ENCODE measurements at regions of chr9 and their contacts with region 1.

Region 1: DNA sequence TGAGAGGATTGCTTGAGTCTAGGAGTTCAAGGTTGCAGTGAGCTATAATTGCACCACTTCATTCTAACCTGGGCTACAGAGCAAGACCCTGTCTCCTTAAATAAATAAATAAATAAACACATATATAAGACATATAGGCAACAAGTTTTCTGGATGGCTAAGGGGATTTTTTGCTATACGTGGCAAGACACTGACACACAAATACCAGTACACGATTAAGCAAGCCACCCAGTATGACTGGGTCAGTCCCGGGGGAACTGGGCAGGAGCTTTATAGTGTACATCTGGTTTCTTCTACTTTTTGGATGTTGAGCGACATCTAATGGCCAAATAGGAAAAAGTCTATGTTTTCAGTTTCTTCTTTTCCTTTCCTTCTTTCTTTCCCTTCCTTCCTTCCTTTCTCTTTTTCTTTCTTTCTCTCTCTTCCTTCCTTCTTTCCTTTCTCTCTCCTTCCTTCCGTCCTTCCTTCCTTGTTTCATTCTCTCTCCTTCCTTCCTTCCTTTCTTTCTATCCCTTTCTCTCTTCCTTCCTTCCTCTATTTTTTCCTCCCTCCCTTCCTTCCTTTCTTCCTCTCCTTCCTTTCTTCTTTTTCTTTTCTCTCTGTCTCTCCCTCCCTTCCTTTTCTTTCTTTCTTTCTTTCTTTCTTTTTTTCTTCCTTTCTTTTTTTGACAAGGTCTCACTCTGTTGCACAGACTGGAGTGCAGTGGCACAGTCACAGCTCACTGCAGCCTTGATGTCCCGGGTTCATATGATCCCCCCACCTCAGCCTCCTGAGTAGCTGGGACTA is 47.0 kb upstream of the PLIN2 start:
- DNase-seq: peak; percentile 65
- H3K4me3 ChIP-seq: no peak overlapping the region
- H3K27ac ChIP-seq: no peak overlapping the region
- H3K27me3 ChIP-seq: no peaks in the 10 kb centered on the region
- CTCF ChIP-seq: peak; percentile 68

Region 2: DNA sequence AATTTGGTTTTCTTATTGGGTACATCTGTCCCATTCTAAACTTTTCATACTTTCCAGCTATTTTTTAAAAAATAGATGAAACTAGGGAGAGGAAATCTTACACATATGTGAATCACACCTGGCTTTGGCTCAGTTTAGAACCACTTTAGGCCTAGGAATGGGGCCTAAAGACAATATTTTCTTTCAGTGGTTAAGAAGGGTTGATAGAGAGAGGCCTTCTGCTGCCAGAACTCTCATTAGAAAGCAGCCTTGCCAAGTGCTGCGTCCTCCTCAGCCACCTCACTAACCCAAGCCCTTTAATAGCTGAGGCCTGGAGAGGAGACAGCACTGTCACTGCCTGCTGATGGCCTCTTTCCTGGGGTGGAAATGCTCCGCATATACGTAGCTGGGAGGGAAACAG is 308.8 kb before region 1 on chr9:
- CTCF ChIA-PET with region 1: no interaction called
- POLR2A ChIA-PET with region 1: no interaction called
- DNase-seq: no peak
- H3K4me3 ChIP-seq: no peak overlapping the region
- H3K27ac ChIP-seq: no peak overlapping the region
- H3K27me3 ChIP-seq: no peaks in the 10 kb centered on the region
- CTCF ChIP-seq: no peak

Region 3: GRCh38 chr9:19028835-19029451 is 145.4 kb before region 1 on chr9:
- CTCF ChIA-PET with region 1: interaction called, 10 read pairs
- POLR2A ChIA-PET with region 1: no interaction called
- DNase-seq: peak; percentile 52
- H3K4me3 ChIP-seq: no peak overlapping the region
- H3K27ac ChIP-seq: no peak overlapping the region
- H3K27me3 ChIP-seq: peaks cover 2% of the 10 kb centered on the region
- CTCF ChIP-seq: peak; percentile 74

Region 4: GRCh38 chr9:19048966-19049916 is 125.1 kb before region 1 on chr9 and contains the start of gene RRAGA:
- CTCF ChIA-PET with region 1: interaction called, 53 read pairs
- POLR2A ChIA-PET with region 1: interaction called, 8 read pairs
- DNase-seq: peak; percentile 94
- H3K4me3 ChIP-seq: peak within 1 kb of the TSS; percentile 88
- H3K27ac ChIP-seq: peak within 1 kb of the TSS; percentile 94
- H3K27me3 ChIP-seq: no peaks in the 10 kb centered on the region
- CTCF ChIP-seq: peak; percentile 85
- polyA plus RNA-seq, gene RRAGA: 180 and 186 TPM in 2 replicates

Region 5: DNA sequence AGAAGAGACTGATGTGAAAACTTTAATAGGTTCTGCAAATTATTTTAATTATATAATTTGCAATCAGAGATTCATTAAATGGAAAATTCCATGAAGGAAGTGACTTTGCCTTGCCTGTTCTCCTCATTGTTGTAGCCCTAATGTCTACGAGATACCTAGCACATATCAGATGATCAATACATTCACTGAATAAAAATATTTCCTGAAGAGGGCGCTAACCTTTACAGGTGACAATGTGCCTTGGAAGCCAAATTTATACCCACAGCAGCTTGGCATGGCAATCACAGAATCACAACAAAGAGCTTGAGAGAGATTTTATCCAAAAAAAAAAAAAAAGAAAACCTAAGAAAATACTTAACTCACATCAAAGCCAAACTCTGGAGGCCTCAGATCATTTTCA is 89.0 kb before region 1 on chr9:
- CTCF ChIA-PET with region 1: interaction called, 29 read pairs
- POLR2A ChIA-PET with region 1: interaction called, 4 read pairs
- DNase-seq: no peak
- H3K4me3 ChIP-seq: no peak overlapping the region
- H3K27ac ChIP-seq: no peak overlapping the region
- H3K27me3 ChIP-seq: no peaks in the 10 kb centered on the region
- CTCF ChIP-seq: peak; percentile 37

Region 6: DNA sequence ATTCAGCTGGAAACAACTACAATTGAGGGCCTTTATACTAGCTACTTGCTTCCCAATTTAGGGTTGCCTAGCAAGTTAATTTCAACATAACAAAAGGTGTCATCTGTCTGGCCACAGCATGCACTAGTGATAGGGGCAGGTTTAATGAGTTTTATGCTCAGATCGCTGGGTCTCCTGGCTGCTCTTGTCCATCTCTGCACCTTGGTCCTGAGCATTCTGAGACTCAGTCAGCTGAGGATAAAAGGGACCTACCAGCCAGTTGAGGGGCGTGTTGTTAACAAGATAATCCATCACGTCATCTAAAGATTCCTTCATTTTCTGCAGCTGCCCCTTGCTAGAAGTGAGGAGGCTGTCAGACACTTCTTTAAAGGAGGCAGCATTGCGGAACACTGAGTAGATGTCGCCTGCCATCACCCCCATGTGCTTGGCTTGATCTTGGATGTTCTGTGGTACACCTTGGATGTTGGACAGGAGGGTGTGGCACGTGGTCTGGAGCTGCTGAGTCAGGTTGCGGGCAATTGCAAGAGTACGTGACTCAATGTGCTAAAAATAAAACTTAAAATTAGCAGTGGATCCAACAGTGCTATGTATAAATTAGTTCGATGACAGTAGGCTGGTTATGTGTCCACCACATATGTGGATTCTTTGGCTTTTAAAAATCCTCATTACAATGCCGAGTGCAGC is 58.1 kb before region 1 on chr9:
- CTCF ChIA-PET with region 1: interaction called, 5 read pairs
- POLR2A ChIA-PET with region 1: interaction called, 12 read pairs
- DNase-seq: no peak
- H3K4me3 ChIP-seq: no peak overlapping the region
- H3K27ac ChIP-seq: no peak overlapping the region
- H3K27me3 ChIP-seq: no peaks in the 10 kb centered on the region
- CTCF ChIP-seq: no peak

Region 7: GRCh38 chr9:19162956-19163355 is 11.4 kb before region 1 on chr9:
- CTCF ChIA-PET with region 1: interaction called, 12 read pairs
- POLR2A ChIA-PET with region 1: interaction called, 5 read pairs
- DNase-seq: no peak
- H3K4me3 ChIP-seq: no peak overlapping the region
- H3K27ac ChIP-seq: no peak overlapping the region
- H3K27me3 ChIP-seq: no peaks in the 10 kb centered on the region
- CTCF ChIP-seq: no peak

Region 8: GRCh38 chr9:19184144-19184917 is 10.0 kb after region 1 on chr9:
- CTCF ChIA-PET with region 1: interaction called, 23 read pairs
- POLR2A ChIA-PET with region 1: no interaction called
- DNase-seq: peak; percentile 48
- H3K4me3 ChIP-seq: no peak overlapping the region
- H3K27ac ChIP-seq: peak overlapping the region; percentile 96
- H3K27me3 ChIP-seq: no peaks in the 10 kb centered on the region
- CTCF ChIP-seq: no peak

Measured in AG04450 (cell line).